ENCODE measurements at regions of chr17 and their contacts with region 1.

Region 1: GRCh38 chr17:58692239-58693055 is at the start of gene RAD51C:
- DNase-seq: peak; percentile 83
- ATAC-seq: peak; percentile 98
- H3K4me3 Mint-ChIP-seq: peak within 1 kb of the TSS; percentile 94
- H3K27ac Mint-ChIP-seq: peak within 1 kb of the TSS; percentile 89
- H3K4me1 Mint-ChIP-seq: peaks cover 22% of the 10 kb centered on the region
- H3K27me3 Mint-ChIP-seq: no peaks in the 10 kb centered on the region
- CTCF ChIP-seq: no peak
- total RNA-seq, gene RAD51C: 32.8 and 36.8 TPM in 2 replicates

Region 2: GRCh38 chr17:58504826-58505521 is 187.5 kb before region 1 on chr17:
- CTCF ChIA-PET with region 1: no interaction called
- POLR2A ChIA-PET with region 1: interaction called, 10 read pairs
- intact Hi-C with region 1: no loop called
- DNase-seq: peak; percentile 44
- ATAC-seq: peak; percentile 94
- H3K4me3 Mint-ChIP-seq: peak overlapping the region; percentile 64
- H3K27ac Mint-ChIP-seq: peak overlapping the region; percentile 97
- H3K4me1 Mint-ChIP-seq: peaks cover 28% of the 10 kb centered on the region
- H3K27me3 Mint-ChIP-seq: no peaks in the 10 kb centered on the region
- CTCF ChIP-seq: no peak

Region 3: GRCh38 chr17:58525181-58525601 is 167.3 kb before region 1 on chr17:
- CTCF ChIA-PET with region 1: no interaction called
- POLR2A ChIA-PET with region 1: no interaction called
- intact Hi-C with region 1: no loop called
- DNase-seq: no peak
- ATAC-seq: no peak
- H3K4me3 Mint-ChIP-seq: no peak overlapping the region
- H3K27ac Mint-ChIP-seq: no peak overlapping the region
- H3K4me1 Mint-ChIP-seq: peaks cover 3% of the 10 kb centered on the region
- H3K27me3 Mint-ChIP-seq: peaks cover 3% of the 10 kb centered on the region
- CTCF ChIP-seq: no peak

Region 4: GRCh38 chr17:58587702-58588254 is 104.7 kb before region 1 on chr17:
- CTCF ChIA-PET with region 1: interaction called, 3 read pairs
- POLR2A ChIA-PET with region 1: no interaction called
- intact Hi-C with region 1: loop called (anchors 1 kb)
- DNase-seq: peak; percentile 21
- ATAC-seq: peak; percentile 86
- H3K4me3 Mint-ChIP-seq: no peak overlapping the region
- H3K27ac Mint-ChIP-seq: no peak overlapping the region
- H3K4me1 Mint-ChIP-seq: peaks cover 3% of the 10 kb centered on the region
- H3K27me3 Mint-ChIP-seq: no peaks in the 10 kb centered on the region
- CTCF ChIP-seq: no peak

Region 5: GRCh38 chr17:58755577-58756245 is 63.3 kb after region 1 on chr17 and contains the start of gene PPM1E:
- CTCF ChIA-PET with region 1: no interaction called
- POLR2A ChIA-PET with region 1: interaction called, 10 read pairs
- intact Hi-C with region 1: loop called (anchors 10 kb)
- DNase-seq: peak; percentile 56
- ATAC-seq: peak; percentile 77
- H3K4me3 Mint-ChIP-seq: peak within 1 kb of the TSS; percentile 92
- H3K27ac Mint-ChIP-seq: no peak within 1 kb of the TSS
- H3K4me1 Mint-ChIP-seq: peaks cover 17% of the 10 kb centered on the region
- H3K27me3 Mint-ChIP-seq: peaks cover 36% of the 10 kb centered on the region
- CTCF ChIP-seq: no peak
- total RNA-seq, gene PPM1E: 0.02 and 0.07 TPM in 2 replicates

Measured in activated B cell treated with CpG ODN at 0.5 μM for 24 hours (primary cell).